CD4-positive, alpha-beta T cell (primary cell): ENCODE measurements at regions of chr19 and their contacts with region 1.

Region 1: GRCh38 chr19:19385108-19385899 is 20.2 kb upstream of the GATAD2A start:
- DNase-seq: peak; percentile 97 to 100 (median 99)
- ATAC-seq: peak; percentile 89
- H3K4me3 ChIP-seq: peak overlapping the region; percentile 92
- H3K4me3 Mint-ChIP-seq: peak overlapping the region; percentile 99
- H3K27ac ChIP-seq: peak overlapping the region; percentile 64 to 77
- H3K27ac Mint-ChIP-seq: peak overlapping the region; percentile 94
- H3K4me1 ChIP-seq: peaks cover 52% of the 10 kb centered on the region
- H3K4me1 Mint-ChIP-seq: peaks cover 44% of the 10 kb centered on the region
- H3K27me3 ChIP-seq: no peaks in the 10 kb centered on the region
- H3K27me3 Mint-ChIP-seq: no peaks in the 10 kb centered on the region
- CTCF ChIP-seq: no peak

Region 2: GRCh38 chr19:19361075-19361594 is 24.2 kb before region 1 on chr19:
- CTCF ChIA-PET with region 1: no interaction called
- POLR2A ChIA-PET with region 1: interaction called, 30 read pairs
- intact Hi-C with region 1: loop called in 1 of 2 experiments (anchors 2 kb)
- DNase-seq: peak; percentile 31 to 88 (median 60)
- ATAC-seq: peak; percentile 57
- H3K4me3 ChIP-seq: no peak overlapping the region
- H3K4me3 Mint-ChIP-seq: peak overlapping the region; percentile 57
- H3K27ac ChIP-seq: no peak overlapping the region
- H3K27ac Mint-ChIP-seq: peak overlapping the region; percentile 75
- H3K4me1 ChIP-seq: peaks cover 45% of the 10 kb centered on the region
- H3K4me1 Mint-ChIP-seq: peaks cover 42% of the 10 kb centered on the region
- H3K27me3 ChIP-seq: no peaks in the 10 kb centered on the region
- H3K27me3 Mint-ChIP-seq: no peaks in the 10 kb centered on the region
- CTCF ChIP-seq: peak; percentile 79

Region 3: DNA sequence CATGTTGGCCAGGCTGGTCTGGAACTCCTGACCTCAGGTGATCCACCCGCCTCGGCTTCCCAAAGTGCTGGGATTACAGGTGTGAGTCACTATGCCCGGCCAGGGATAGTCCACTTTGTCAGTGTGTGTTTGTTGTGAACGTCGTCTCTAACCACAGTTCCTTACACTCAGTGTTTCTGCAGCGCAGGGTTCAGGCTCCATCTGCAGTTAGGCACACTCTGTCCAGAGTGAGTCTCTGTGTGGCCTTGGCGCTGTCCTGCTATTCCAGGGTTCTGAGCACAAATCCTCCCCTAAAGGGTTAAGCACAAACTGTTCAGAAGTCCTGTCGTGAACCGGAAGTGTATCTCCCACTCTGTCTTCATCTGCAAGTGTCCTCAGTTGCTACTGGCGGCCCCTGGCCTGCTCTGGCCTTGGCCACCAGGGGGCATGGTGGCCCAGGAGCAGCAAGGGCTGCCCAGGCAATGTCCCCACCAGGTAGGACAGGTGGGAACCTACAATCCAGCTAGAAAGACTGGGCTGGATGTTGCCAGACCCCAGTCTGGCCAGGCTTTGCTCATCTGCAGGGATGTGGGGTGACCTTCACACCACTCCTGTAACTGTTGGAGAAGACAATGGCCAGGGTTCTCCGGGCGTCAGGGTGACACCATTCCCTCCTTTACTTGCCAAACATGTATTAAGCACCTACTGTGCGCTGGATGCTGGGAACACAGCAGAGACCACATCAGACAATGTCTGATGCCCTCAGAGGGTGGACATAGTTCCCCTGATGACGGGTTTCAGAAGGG is 18.5 kb before region 1 on chr19:
- CTCF ChIA-PET with region 1: no interaction called
- POLR2A ChIA-PET with region 1: interaction called, 30 read pairs
- intact Hi-C with region 1: loop called in 1 of 2 experiments (anchors 2 kb)
- DNase-seq: peak; percentile 45 to 87 (median 64)
- ATAC-seq: peak; percentile 56
- H3K4me3 ChIP-seq: no peak overlapping the region
- H3K4me3 Mint-ChIP-seq: peak overlapping the region; percentile 49
- H3K27ac ChIP-seq: no peak overlapping the region
- H3K27ac Mint-ChIP-seq: peak overlapping the region; percentile 76
- H3K4me1 ChIP-seq: peaks cover 33% of the 10 kb centered on the region
- H3K4me1 Mint-ChIP-seq: peaks cover 21% of the 10 kb centered on the region
- H3K27me3 ChIP-seq: no peaks in the 10 kb centered on the region
- H3K27me3 Mint-ChIP-seq: no peaks in the 10 kb centered on the region
- CTCF ChIP-seq: peak; percentile 91

Region 4: GRCh38 chr19:19372656-19373416 is 12.5 kb before region 1 on chr19:
- CTCF ChIA-PET with region 1: interaction called, 3 read pairs
- POLR2A ChIA-PET with region 1: interaction called, 35 read pairs
- intact Hi-C with region 1: no loop called
- DNase-seq: peak in 6 of 14 experiments; percentile 18 to 86 (median 62)
- ATAC-seq: peak; percentile 83
- H3K4me3 ChIP-seq: no peak overlapping the region
- H3K4me3 Mint-ChIP-seq: peak overlapping the region; percentile 43
- H3K27ac ChIP-seq: peak overlapping the region in 1 of 2 donors; percentile 81
- H3K27ac Mint-ChIP-seq: peak overlapping the region; percentile 85
- H3K4me1 ChIP-seq: peaks cover 17% of the 10 kb centered on the region
- H3K4me1 Mint-ChIP-seq: peaks cover 12% of the 10 kb centered on the region
- H3K27me3 ChIP-seq: no peaks in the 10 kb centered on the region
- H3K27me3 Mint-ChIP-seq: no peaks in the 10 kb centered on the region
- CTCF ChIP-seq: no peak

Region 5: DNA sequence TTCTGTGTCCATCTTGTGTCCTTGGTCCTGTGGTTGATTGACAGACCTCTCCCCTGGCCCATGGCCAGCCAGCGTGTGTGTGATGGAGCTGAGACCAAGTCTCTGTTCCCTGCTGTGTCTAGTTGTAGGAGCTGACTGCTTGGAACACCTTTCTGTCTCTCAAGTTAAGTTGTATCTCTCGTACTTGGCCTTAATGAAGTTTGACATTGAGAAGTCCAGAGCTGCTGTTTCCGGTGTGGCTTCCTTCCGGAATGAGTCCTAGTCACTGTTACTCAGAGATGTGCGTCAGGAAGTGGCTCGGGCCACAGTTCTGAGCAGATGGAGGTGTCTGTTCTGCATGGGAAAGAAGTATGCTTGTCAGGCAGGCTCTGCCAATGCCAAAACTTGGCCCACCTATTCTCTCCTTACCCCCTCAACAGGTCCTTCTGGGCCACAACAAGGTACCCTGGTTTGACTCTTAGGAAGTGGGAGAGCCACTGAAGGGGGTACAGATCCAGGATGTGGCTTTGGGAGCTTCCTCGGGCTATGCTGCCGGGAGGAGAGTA is 74.5 kb after region 1 on chr19:
- CTCF ChIA-PET with region 1: no interaction called
- POLR2A ChIA-PET with region 1: interaction called, 10 read pairs
- intact Hi-C with region 1: no loop called
- DNase-seq: peak; percentile 32 to 89 (median 62)
- ATAC-seq: peak; percentile 68
- H3K4me3 ChIP-seq: peak overlapping the region; percentile 50
- H3K4me3 Mint-ChIP-seq: peak overlapping the region; percentile 89
- H3K27ac ChIP-seq: peak overlapping the region; percentile 88 to 91
- H3K27ac Mint-ChIP-seq: peak overlapping the region; percentile 95
- H3K4me1 ChIP-seq: peaks cover 90% of the 10 kb centered on the region
- H3K4me1 Mint-ChIP-seq: peaks cover 75% of the 10 kb centered on the region
- H3K27me3 ChIP-seq: no peaks in the 10 kb centered on the region
- H3K27me3 Mint-ChIP-seq: no peaks in the 10 kb centered on the region
- CTCF ChIP-seq: no peak

Region 6: GRCh38 chr19:20051841-20052768 is 666.8 kb after region 1 on chr19:
- CTCF ChIA-PET with region 1: no interaction called
- POLR2A ChIA-PET with region 1: no interaction called
- intact Hi-C with region 1: loop called in 1 of 2 experiments (anchors 5 kb)
- DNase-seq: peak; percentile 29 to 77 (median 50)
- ATAC-seq: peak; percentile 93
- H3K4me3 ChIP-seq: peak overlapping the region; percentile 95
- H3K4me3 Mint-ChIP-seq: peak overlapping the region; percentile 99
- H3K27ac ChIP-seq: peak overlapping the region; percentile 67 to 73
- H3K27ac Mint-ChIP-seq: peak overlapping the region; percentile 90
- H3K4me1 ChIP-seq: peaks cover 15% of the 10 kb centered on the region
- H3K4me1 Mint-ChIP-seq: peaks cover 18% of the 10 kb centered on the region
- H3K27me3 ChIP-seq: no peaks in the 10 kb centered on the region
- H3K27me3 Mint-ChIP-seq: peaks cover 4% of the 10 kb centered on the region
- CTCF ChIP-seq: no peak